Activated CD8-positive, alpha-beta memory T cell treated with anti-CD3 and anti-CD28 coated beads, Interleukin-2, amount 10 ng/mL, durations not matched to agents 7 days and 5 days (primary cell): ENCODE measurements at regions of chr5 and their contacts with region 1.

Region 1: GRCh38 chr5:180315762-180316212 is 23.9 kb upstream of the MAPK9 start:
- DNase-seq: peak; percentile 77
- ATAC-seq: peak; percentile 52
- H3K4me3 Mint-ChIP-seq: no peak overlapping the region
- H3K27ac Mint-ChIP-seq: no peak overlapping the region
- H3K4me1 Mint-ChIP-seq: peaks cover 4% of the 10 kb centered on the region
- H3K27me3 Mint-ChIP-seq: no peaks in the 10 kb centered on the region

Region 2: GRCh38 chr5:180126726-180127681 is 188.8 kb before region 1 on chr5:
- CTCF ChIA-PET with region 1: interaction called, 28 read pairs
- DNase-seq: peak; percentile 50
- ATAC-seq: peak; percentile 74
- H3K4me3 Mint-ChIP-seq: no peak overlapping the region
- H3K27ac Mint-ChIP-seq: no peak overlapping the region
- H3K4me1 Mint-ChIP-seq: peaks cover 2% of the 10 kb centered on the region
- H3K27me3 Mint-ChIP-seq: peaks cover 17% of the 10 kb centered on the region

Region 3: DNA sequence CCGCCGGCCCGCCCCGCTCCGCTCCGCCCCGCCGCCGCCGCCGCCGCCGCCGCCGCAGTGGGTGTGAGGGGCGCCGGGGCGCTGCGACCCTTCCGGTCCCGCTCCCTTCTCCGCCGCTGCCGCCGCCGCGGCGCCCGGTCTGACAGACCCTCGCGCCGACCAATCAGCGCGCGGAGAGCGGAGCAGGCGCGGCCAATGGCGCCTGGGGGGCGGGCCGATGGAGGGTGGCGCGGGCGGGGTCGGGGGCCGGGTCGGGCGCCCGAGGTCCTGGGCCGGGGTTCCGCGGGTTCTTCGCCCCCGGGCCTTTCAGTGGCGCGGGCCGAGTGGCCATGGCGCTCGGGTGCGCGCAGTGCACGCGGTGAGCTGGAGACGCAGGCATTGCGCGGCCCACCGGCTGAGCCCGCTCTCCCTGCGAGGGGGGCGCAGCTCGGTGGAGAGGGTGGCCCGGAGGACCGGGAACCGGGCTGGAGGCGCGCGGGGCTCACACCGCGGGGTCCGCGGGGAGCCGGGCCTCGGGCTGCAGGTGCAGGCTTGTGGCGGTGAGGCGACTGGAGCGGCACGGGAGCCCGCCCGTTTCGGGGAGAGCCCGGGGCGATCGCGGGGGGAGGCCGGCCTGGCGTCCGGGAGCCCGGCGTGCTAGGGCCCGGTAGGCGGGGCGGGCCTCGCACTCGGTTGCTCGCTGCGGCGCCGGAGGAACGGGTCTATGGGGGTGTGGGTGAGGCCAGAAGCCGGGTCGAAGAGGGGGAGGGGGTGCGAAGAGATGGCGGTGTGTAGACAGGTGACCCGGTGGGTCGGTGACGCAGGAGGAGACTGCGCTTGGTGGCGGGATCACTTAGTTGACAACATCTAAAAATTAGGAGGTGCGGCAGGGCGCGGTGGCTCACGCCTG is 23.6 kb before region 1 on chr5 and contains the start of gene MAPK9:
- CTCF ChIA-PET with region 1: interaction called, 147 read pairs
- DNase-seq: peak; percentile 87
- ATAC-seq: peak; percentile 86
- H3K4me3 Mint-ChIP-seq: peak within 1 kb of the TSS; percentile 93
- H3K27ac Mint-ChIP-seq: peak within 1 kb of the TSS; percentile 98
- H3K4me1 Mint-ChIP-seq: peaks cover 23% of the 10 kb centered on the region
- H3K27me3 Mint-ChIP-seq: no peaks in the 10 kb centered on the region
- total RNA-seq, gene MAPK9: 40.9 to 44.4 TPM

Region 4: GRCh38 chr5:180304431-180305375 is 11.1 kb before region 1 on chr5:
- CTCF ChIA-PET with region 1: interaction called, 11 read pairs
- DNase-seq: no peak
- ATAC-seq: no peak
- H3K4me3 Mint-ChIP-seq: no peak overlapping the region
- H3K27ac Mint-ChIP-seq: no peak overlapping the region
- H3K4me1 Mint-ChIP-seq: no peaks in the 10 kb centered on the region
- H3K27me3 Mint-ChIP-seq: no peaks in the 10 kb centered on the region